HEK293 (cell line): ENCODE measurements at regions of chr1 and their contacts with region 1.

Region 1: GRCh38 chr1:225923692-225924555 is at the start of gene PYCR2:
- H3K4me3 ChIP-seq: peak within 1 kb of the TSS; percentile 80
- H3K27ac ChIP-seq: peak within 1 kb of the TSS; percentile 88
- H3K4me1 ChIP-seq: peaks cover 11% of the 10 kb centered on the region; the same call in 1 of the 2 replicates
- CTCF ChIP-seq: peak; percentile 81; the same call in 1 of the 2 replicates

Region 2: GRCh38 chr1:225737196-225737595 is 186.7 kb before region 1 on chr1:
- CTCF ChIA-PET with region 1: no interaction called
- POLR2A ChIA-PET with region 1: no interaction called
- H3K4me3 ChIP-seq: no peak overlapping the region
- H3K27ac ChIP-seq: no peak overlapping the region
- H3K4me1 ChIP-seq: peaks cover 17% of the 10 kb centered on the region
- CTCF ChIP-seq: no peak

Region 3: DNA sequence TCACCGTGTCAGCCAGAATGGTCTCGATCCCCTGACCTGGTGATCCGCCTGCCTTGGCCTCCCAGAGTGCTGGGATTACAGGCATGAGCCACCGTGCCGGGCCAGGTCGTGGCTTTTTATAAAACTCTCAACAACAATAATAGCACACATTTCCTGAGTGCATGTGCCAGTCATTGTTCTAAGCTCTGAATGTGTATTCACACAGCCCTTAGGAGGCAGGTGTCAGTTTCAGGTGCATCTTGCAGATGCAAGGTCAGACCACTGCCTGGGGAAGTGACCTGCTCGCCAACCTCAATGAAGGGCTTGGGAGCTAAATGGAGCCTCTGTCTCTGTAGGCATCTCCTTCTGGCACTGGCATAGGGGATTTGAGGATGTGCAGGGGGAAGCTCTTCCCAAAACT is 18.6 kb after region 1 on chr1:
- CTCF ChIA-PET with region 1: no interaction called
- POLR2A ChIA-PET with region 1: interaction called, 13 read pairs
- H3K4me3 ChIP-seq: no peak overlapping the region
- H3K27ac ChIP-seq: no peak overlapping the region
- H3K4me1 ChIP-seq: no peaks in the 10 kb centered on the region
- CTCF ChIP-seq: no peak